ENCODE measurements at regions of chr16 and their contacts with region 1.

Region 1: DNA sequence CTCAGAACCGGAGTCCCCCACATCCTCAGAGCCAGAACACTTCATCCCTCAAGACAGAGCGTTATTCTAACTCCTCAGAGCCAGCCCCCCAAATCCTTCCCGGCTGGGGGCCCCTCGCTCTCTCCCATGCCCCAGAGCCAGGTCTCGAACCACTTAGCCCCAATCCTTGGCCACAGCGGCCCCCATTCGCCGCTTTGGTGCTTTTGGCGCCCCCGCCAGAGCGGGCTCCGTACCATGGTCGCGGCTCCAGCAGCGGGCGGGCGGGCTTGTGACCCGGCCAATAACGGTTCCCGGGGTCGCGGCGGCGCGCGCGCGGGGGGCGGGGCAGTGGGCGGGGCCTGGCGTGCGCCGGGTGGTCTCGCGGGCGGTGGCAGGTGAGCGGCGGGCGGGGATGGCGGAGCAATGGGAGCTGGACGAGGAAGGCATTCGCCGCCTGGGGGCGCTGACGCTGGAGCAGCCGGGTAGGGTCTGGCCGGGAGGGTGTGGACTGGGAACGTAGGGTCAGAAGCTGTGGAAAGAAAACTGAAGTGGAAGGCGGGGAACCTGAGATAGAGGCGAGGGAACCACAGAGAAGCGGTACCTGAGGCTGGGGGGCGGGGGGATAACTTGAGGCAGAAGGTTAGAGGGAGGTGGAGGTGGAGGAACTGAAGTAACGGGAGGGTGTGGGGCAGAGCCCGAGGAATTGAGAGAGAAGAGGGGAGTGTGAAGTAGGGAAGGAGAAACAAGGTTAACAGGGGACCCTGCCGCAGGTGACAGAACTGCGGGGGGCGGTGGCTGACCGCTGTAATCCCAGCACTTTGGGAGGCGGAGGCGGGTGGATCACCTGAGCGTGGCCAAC is at the starts of genes KCTD19 and LRRC36:
- DNase-seq: peak; percentile 80
- ATAC-seq: peak; percentile 86
- H3K4me3 Mint-ChIP-seq: peak within 1 kb of the TSS; percentile 81
- H3K27ac Mint-ChIP-seq: peak within 1 kb of the TSS; percentile 0
- H3K4me1 Mint-ChIP-seq: peaks cover 14% of the 10 kb centered on the region
- H3K27me3 Mint-ChIP-seq: peaks cover 53% of the 10 kb centered on the region
- total RNA-seq, gene KCTD19: 1.1 to 3.3 TPM
- total RNA-seq, gene LRRC36: 0.45 to 1.0 TPM

Region 2: DNA sequence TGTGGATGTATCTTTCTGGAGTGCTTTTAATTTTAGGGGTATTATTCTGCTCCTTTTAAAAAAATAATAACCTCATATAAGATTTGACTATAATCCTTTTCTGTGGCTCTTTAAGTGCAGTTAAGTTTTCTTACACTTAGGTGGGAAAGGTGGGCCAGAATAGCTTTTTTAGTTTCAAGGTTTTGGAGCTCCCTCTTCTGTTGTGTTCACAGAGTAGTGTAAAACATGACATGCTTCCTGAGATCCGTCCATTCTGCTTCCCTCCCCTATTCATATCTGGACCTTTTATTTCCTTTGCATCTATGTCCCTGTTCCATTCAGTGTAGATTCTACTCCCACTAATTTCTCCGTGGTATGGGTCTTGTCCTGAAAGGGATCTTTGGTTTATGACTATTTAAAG is 12.8 kb after region 1 on chr16:
- CTCF ChIA-PET with region 1: interaction called, 19 read pairs
- DNase-seq: no peak
- ATAC-seq: peak; percentile 16
- H3K4me3 Mint-ChIP-seq: no peak overlapping the region
- H3K27ac Mint-ChIP-seq: no peak overlapping the region
- H3K4me1 Mint-ChIP-seq: no peaks in the 10 kb centered on the region
- H3K27me3 Mint-ChIP-seq: peaks cover 17% of the 10 kb centered on the region

Measured in activated CD8-positive, alpha-beta memory T cell treated with anti-CD3 and anti-CD28 coated beads, Interleukin-2, amount 10 ng/mL, durations not matched to agents 7 days and 5 days (primary cell).